ENCODE measurements at regions of chr11 and their contacts with region 1.

Region 1: DNA sequence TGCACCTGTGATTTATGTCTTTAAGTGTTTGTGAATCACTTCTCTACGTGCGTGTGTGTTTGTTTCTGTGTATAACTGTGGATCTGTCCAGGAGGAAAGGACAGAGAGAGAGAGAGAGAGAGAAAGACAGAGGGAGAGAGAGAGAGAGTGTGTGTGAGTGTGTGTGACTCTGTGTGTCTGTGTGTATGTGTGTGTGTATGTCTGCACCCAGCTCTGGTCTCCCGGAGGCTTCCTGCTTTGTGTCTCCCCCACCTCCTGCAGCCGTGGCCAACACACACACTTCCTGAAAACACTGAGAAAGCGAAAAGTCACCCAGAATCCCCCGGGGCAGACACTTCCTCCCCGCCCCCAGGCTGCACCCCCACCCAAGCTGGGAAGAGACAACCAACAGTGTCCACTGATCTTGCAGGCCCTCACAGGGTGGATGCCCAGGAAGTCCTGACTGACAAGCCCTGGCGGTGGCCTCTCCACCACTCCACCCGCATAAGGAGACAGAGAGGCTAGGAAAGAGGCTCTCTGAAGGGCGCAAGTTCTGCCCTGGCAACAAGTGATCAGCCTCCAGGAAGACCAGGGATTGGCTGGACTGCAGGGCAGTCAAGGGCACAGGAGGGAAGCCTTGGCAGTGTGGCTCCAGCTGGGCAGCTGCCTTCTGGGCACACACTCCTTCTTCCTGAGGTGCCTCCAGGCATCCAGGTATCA is 30.0 kb downstream of the ARAP1 start:
- DNase-seq: peak; percentile 85 to 88
- H3K4me3 ChIP-seq: peak overlapping the region; percentile 59
- H3K27ac ChIP-seq: peak overlapping the region; percentile 45
- H3K4me1 ChIP-seq: peaks cover 15% of the 10 kb centered on the region
- H3K27me3 ChIP-seq: no peaks in the 10 kb centered on the region
- CTCF ChIP-seq: no peak

Region 2: GRCh38 chr11:72561856-72562255 is 160.3 kb before region 1 on chr11:
- CTCF ChIA-PET with region 1: no interaction called
- POLR2A ChIA-PET with region 1: interaction called, 11 read pairs
- intact Hi-C with region 1: no loop called
- DNase-seq: no peak
- H3K4me3 ChIP-seq: no peak overlapping the region
- H3K27ac ChIP-seq: no peak overlapping the region
- H3K4me1 ChIP-seq: no peaks in the 10 kb centered on the region
- H3K27me3 ChIP-seq: no peaks in the 10 kb centered on the region
- CTCF ChIP-seq: no peak

Region 3: GRCh38 chr11:72741429-72741833 is 19.2 kb after region 1 on chr11:
- CTCF ChIA-PET with region 1: interaction called, 10 read pairs
- POLR2A ChIA-PET with region 1: interaction called, 3 read pairs
- intact Hi-C with region 1: no loop called
- DNase-seq: peak; percentile 73 to 81
- H3K4me3 ChIP-seq: peak overlapping the region; percentile 5; the same call in 1 of the 2 replicates
- H3K27ac ChIP-seq: peak overlapping the region; percentile 76
- H3K4me1 ChIP-seq: peaks cover 72% of the 10 kb centered on the region
- H3K27me3 ChIP-seq: no peaks in the 10 kb centered on the region
- CTCF ChIP-seq: no peak

Region 4: GRCh38 chr11:72793425-72794367 is 71.5 kb after region 1 on chr11 and contains the start of gene STARD10:
- CTCF ChIA-PET with region 1: interaction called, 13 read pairs
- POLR2A ChIA-PET with region 1: no interaction called
- intact Hi-C with region 1: loop called (anchors 1 kb)
- DNase-seq: peak; percentile 85 to 96
- H3K4me3 ChIP-seq: peak within 1 kb of the TSS; percentile 70
- H3K27ac ChIP-seq: peak within 1 kb of the TSS; percentile 25
- H3K4me1 ChIP-seq: peaks cover 45% of the 10 kb centered on the region
- H3K27me3 ChIP-seq: no peaks in the 10 kb centered on the region
- CTCF ChIP-seq: peak; percentile 100
- total RNA-seq, gene STARD10: 145 and 184 TPM in 2 replicates

Region 5: DNA sequence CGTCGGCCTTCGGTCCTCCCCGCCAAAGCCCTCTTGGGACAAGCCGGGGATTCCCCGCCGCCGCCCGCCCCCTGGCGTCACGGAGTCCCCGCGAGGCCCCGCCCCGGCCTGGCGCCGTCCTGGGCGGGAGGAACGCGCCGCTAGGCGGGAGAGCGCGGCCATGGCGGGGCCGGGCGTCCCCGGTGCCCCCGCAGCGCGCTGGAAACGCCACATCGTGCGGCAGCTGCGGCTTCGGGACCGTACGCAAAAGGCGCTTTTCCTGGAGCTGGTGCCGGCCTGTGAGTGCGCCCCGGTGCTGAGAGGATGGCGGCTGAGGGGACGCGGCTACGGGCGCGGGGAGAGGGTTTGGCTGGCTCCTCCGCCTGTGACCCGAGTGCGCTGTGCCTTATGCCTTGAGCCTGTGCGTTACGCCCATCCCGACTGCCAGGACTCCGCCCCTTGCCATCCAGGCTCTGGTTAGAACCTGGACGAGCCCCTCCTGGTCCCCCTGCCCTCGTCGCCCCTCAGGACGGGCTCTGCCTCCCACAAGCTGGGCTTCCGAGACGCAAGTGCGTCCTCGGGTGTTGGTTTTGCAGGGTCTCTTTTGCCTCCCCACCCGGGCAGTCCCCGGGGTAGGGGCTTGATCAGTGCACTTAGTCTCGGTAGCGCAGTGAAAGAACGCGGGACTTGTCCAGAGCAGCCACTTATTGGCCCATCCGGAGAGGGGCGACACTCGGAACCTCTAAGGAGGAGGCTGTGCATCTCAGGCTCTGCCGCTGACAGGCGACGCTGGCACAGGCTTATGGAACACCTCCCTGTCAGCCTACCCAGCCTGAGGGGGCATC is 92.3 kb after region 1 on chr11 and contains the start of gene ATG16L2:
- CTCF ChIA-PET with region 1: interaction called, 6 read pairs
- POLR2A ChIA-PET with region 1: no interaction called
- intact Hi-C with region 1: loop called (anchors 2 kb)
- DNase-seq: peak; percentile 76 to 93
- H3K4me3 ChIP-seq: peak within 1 kb of the TSS; percentile 85
- H3K27ac ChIP-seq: peak within 1 kb of the TSS; percentile 74
- H3K4me1 ChIP-seq: peaks cover 39% of the 10 kb centered on the region
- H3K27me3 ChIP-seq: no peaks in the 10 kb centered on the region
- CTCF ChIP-seq: no peak; the same call in 1 of the 2 replicates
- total RNA-seq, gene ATG16L2: 17.5 and 24.0 TPM in 2 replicates

Region 6: DNA sequence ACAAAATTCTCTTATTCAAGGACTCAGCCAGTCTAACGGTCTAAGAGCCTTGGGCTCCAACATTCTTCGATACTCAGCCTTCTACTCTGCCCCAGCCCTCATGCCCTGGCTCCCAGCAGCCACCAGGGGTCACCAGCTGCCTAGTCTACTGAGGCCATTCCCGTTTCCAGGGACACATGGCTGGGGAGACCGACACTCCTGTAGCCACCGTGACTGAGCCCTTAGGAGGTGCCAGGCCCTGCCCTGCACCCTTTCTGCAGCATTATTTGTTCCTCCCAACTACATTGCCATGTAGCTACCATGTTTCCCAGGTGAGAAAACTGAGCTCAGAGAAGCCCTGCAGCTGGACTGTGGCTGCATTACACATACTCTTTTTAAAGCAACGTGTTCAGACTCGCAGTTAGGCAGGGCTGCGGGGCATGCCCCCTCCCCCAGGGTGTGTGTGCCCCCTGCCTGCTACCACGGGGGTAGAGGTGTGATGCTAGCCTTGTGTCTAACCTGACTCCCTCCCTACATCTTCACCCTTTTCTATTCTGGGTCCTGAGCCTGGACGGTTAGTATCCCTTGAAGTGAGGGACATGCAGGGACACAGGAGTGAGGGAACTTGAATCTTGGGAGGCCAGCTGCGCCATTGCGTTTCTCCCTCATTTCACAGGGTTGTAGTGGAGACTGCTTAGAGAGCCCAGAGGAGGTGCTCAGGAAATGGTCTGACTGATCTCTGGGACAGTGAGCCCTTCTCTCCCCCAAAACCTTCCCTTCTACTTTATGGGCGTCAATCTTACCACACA is 109.5 kb after region 1 on chr11:
- CTCF ChIA-PET with region 1: interaction called, 18 read pairs
- POLR2A ChIA-PET with region 1: no interaction called
- intact Hi-C with region 1: no loop called
- DNase-seq: peak; percentile 61 to 85
- H3K4me3 ChIP-seq: no peak overlapping the region
- H3K27ac ChIP-seq: no peak overlapping the region
- H3K4me1 ChIP-seq: 0 out of 2 replicates have a peak, but pooled peaks cover 4% of the 10 kb centered on the region
- H3K27me3 ChIP-seq: no peaks in the 10 kb centered on the region
- CTCF ChIP-seq: peak; percentile 97

Region 7: DNA sequence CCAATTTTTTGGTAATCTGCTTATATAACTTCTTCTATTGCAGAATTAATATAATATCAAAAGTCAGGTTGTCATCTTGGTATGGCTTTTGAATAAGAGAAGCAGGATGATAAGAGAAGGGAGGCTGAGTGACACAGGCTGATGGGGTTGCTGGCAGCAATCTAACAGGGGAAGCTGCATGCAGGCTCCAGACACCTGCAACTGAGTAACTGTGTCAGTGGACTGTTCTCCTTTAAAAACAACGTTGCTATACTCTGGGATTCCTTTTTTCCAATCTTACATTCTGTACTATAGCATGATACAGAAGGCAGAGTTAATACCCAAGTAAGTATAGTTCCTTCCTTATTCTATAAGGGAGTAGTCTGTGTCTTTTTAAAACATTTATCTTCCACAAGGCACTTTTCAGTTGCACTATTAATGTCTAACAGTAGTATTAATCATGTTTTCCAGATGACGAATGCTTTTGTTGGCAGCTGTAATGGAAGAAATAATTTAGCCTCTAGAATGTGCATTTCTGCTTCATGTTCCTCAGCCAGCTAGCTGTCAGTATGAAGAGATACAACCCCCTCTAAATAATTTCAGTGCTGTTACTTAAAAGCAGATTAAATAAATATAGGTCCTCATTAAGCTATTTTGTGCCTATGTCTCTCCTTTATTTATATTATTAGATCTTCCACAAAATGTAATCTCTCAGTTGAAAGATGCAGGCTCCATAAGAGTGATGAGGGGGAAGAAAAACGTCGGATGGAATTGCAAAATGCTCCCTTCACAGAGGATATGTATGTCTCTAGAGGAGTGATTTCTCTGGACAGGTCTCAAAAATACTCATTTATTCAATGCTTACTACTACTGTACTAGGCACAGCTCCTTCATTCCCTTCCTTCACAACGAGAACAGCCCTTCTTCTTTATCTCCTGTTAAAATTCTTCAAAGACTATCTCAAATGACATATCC is 142.8 kb after region 1 on chr11:
- CTCF ChIA-PET with region 1: no interaction called
- POLR2A ChIA-PET with region 1: no interaction called
- intact Hi-C with region 1: no loop called
- DNase-seq: no peak
- H3K4me3 ChIP-seq: no peak overlapping the region
- H3K27ac ChIP-seq: no peak overlapping the region
- H3K4me1 ChIP-seq: no peaks in the 10 kb centered on the region
- H3K27me3 ChIP-seq: no peaks in the 10 kb centered on the region
- CTCF ChIP-seq: no peak

Region 8: DNA sequence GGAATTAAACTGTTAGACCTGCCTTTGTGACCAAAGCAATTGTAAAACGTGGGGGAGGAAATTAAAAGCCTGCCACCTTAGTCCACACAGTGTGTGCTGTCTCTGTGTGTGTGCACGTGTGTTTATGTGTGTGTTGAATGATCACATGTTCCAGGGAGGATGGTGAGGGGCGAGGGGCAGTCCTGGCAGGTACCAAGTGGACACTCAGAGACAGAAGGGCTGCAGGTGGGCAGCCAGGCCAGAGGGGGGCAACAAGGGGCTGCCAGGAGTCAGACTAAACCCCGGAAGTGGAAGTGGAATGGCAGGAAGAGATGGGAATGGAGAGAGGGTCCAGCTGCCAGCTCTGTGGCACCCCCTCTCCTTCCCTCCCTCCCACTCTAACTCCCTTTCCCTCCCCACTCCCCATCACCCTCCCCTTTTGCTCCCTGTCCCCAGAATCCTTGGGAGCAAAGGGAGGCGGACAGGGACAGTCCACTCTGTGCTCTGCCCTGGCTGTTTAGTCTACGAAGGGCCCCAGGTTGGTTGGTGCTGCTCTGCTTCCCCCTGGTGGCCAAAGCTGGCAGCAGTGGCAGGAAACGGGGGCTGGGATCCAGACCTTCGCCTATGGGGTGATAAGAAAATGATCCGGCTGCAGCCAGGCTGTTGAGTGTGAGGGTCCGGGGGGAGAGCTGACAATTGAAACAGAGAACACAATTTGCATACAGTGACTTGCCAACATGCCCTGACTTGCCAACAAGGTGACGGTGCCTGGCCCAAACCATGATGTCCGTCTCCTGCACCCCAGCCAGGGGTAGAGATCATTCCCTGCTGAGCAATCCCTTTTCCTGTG is 520.3 kb after region 1 on chr11:
- CTCF ChIA-PET with region 1: interaction called, 9 read pairs
- POLR2A ChIA-PET with region 1: interaction called, 13 read pairs
- intact Hi-C with region 1: loop called (anchors 2 kb)
- DNase-seq: peak in 1 of 2 experiments; percentile 79
- H3K4me3 ChIP-seq: no peak overlapping the region
- H3K27ac ChIP-seq: no peak overlapping the region
- H3K4me1 ChIP-seq: peaks cover 44% of the 10 kb centered on the region
- H3K27me3 ChIP-seq: no peaks in the 10 kb centered on the region
- CTCF ChIP-seq: peak; percentile 94